ENCODE measurements at regions of chr1 and their contacts with region 1.

Region 1: DNA sequence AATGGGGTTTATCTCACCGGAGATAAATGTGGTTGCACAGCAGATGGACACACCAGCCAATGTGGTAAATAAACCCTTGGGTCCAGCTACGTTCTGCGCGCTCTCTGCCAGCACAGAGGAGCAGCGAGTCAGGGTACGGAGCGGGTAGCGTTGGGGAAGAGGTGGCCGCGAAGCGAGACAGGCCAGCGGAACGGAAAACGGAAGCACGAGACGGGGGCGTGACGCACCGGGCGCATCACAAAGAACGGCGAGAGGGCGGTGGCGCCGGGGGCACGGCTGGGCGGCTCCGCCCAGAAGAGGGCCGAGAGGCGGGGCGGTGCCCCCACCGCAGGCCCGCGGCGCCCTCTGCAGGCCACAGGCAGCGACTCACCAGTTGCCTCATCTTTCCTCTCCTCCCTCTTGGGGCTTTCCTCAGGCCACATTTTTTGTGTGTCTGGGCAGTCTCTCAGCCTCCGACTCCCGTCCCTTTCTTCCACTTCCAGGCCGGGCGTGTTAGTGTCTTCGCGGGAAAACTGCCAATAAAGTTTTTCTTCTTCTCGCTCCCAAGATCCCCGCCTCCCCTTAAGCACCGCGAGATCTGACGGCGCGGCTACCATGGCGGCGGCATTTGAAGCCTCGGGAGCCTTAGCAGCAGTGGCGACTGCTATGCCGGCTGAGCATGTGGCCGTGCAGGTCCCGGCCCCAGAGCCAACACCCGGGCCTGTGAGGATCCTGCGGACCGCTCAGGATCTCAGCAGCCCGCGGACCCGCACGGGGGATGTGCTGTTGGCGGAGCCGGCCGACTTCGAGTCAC is at the start of gene DDX20:
- DNase-seq: peak; percentile 92 to 97 (median 95)
- ATAC-seq: peak; percentile 97
- H3K4me3 ChIP-seq: peak within 1 kb of the TSS; percentile 87
- H3K4me3 Mint-ChIP-seq: peak within 1 kb of the TSS; percentile 86 to 100 (median 94)
- H3K27ac ChIP-seq: peak within 1 kb of the TSS; percentile 92
- H3K27ac Mint-ChIP-seq: peak within 1 kb of the TSS; percentile 94 to 100 (median 99)
- H3K4me1 ChIP-seq: peaks cover 4 to 18% of the 10 kb centered on the region in 2 donors
- H3K4me1 Mint-ChIP-seq: peaks cover 24 to 49% (median 39%) of the 10 kb centered on the region in 7 donors
- H3K27me3 ChIP-seq: no peaks in the 10 kb centered on the region
- H3K27me3 Mint-ChIP-seq: peaks cover 0 to 2% (median 0%) of the 10 kb centered on the region in 5 donors
- total RNA-seq, gene DDX20: 12.7 to 27.0 (median 18.7) TPM

Region 2: DNA sequence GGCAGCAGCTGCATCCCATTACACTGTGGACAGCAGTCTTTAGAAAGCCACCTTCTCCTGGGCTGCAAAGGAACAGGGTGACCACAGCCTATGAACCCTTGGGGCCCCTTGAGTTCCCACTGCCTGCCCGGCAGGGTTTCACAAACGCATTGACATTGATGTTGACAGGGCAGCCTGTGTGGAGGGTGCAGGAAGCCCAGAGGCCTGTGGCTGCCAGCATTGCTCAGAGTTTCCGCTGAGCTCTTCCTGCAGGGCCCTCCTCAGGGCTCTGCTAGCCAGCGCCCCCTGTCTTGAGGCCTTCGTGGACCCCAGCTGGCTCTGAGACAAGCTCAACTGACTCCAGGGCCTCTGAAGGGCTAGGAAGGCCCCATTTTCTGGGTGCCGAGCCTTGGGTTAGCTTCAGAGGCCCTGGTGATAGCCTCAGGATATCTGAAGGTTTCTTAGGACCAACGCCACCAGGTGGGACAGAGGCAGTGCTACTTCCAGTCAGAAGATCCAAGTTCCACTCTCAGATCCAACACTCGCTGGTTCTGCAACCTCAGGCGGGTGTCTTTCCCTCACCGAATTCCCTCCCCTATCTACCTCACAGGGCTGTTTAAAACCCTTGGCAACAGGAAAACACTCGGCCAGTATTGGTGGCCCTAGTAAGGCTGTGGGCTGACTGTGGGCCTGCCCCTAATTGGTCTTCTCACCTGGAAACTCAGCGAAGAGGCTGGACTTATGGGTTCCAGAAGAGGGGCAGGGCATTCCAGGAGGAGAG is 1964.6 kb before region 1 on chr1:
- CTCF ChIA-PET with region 1: no interaction called
- POLR2A ChIA-PET with region 1: no interaction called
- intact Hi-C with region 1: no loop called
- DNase-seq: peak; percentile 47 to 78 (median 67)
- ATAC-seq: peak; percentile 93
- H3K4me3 ChIP-seq: peak overlapping the region; percentile 1
- H3K4me3 Mint-ChIP-seq: peak overlapping the region in 8 of 10 donors; percentile 26 to 62 (median 40)
- H3K27ac ChIP-seq: peak overlapping the region; percentile 44
- H3K27ac Mint-ChIP-seq: peak overlapping the region in 8 of 9 donors; percentile 49 to 94 (median 84)
- H3K4me1 ChIP-seq: peaks cover 51 to 52% of the 10 kb centered on the region in 2 donors
- H3K4me1 Mint-ChIP-seq: peaks cover 38 to 88% (median 71%) of the 10 kb centered on the region in 7 donors
- H3K27me3 ChIP-seq: no peaks in the 10 kb centered on the region
- H3K27me3 Mint-ChIP-seq: no peaks in the 10 kb centered on the region

Region 3: GRCh38 chr1:111203681-111204200 is 551.8 kb before region 1 on chr1:
- CTCF ChIA-PET with region 1: no interaction called
- POLR2A ChIA-PET with region 1: no interaction called
- intact Hi-C with region 1: loop called in 1 of 2 experiments (anchors 5 kb)
- DNase-seq: peak; percentile 51 to 86 (median 82)
- ATAC-seq: peak; percentile 71
- H3K4me3 ChIP-seq: peak overlapping the region; percentile 84
- H3K4me3 Mint-ChIP-seq: peak overlapping the region; percentile 90 to 100 (median 99)
- H3K27ac ChIP-seq: peak overlapping the region; percentile 90
- H3K27ac Mint-ChIP-seq: peak overlapping the region; percentile 80 to 99 (median 96)
- H3K4me1 ChIP-seq: peaks cover 30 to 32% of the 10 kb centered on the region in 2 donors
- H3K4me1 Mint-ChIP-seq: peaks cover 32 to 76% (median 61%) of the 10 kb centered on the region in 7 donors
- H3K27me3 ChIP-seq: no peaks in the 10 kb centered on the region
- H3K27me3 Mint-ChIP-seq: no peaks in the 10 kb centered on the region

Region 4: DNA sequence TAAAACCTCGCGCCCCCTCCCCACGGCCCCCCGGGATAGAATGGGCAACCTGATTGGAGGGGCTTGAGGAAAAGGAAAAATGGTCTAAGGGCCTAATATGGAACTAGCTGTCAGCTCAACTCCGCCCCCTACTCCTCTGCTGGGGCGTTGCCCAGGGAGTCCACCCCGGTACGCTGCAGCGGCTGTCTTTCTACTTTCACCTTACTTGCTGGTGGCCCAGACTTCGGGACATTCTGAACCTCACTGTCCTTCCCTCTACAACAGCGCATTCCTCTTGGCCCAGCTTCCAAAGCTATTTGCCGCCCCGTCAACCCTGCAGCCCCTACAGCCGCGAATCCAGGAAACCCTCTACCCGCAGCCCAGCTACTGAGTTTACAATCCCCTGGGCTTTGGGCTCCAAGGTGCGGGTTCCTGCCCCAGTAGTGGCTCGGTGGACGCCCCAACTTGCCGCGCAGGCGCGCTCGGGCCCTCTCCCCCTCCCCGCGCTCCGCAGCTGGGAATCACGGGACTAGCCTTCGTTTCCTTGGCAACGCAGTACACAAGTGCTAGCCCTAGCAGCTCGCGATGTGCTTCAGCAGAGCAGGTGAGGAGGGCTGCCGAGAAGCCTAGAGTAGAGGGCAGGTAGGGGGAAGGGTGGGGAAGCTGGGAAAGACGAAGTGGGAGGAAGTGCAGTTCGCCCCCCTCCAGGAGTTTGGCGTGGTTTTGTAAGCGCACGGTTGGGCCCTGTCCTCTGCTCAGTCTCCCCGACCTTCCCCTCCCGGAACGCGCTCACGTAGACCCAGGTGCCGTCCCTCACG is 409.2 kb before region 1 on chr1:
- CTCF ChIA-PET with region 1: no interaction called
- POLR2A ChIA-PET with region 1: no interaction called
- intact Hi-C with region 1: loop called in 1 of 2 experiments (anchors 5 kb)
- DNase-seq: peak; percentile 74 to 94 (median 92)
- ATAC-seq: peak; percentile 94
- H3K4me3 ChIP-seq: peak overlapping the region; percentile 90
- H3K4me3 Mint-ChIP-seq: peak overlapping the region; percentile 85 to 97 (median 92)
- H3K27ac ChIP-seq: peak overlapping the region; percentile 61
- H3K27ac Mint-ChIP-seq: peak overlapping the region; percentile 38 to 97 (median 90)
- H3K4me1 ChIP-seq: peaks cover 5 to 9% of the 10 kb centered on the region in 2 donors
- H3K4me1 Mint-ChIP-seq: peaks cover 13 to 26% (median 19%) of the 10 kb centered on the region in 7 donors
- H3K27me3 ChIP-seq: no peaks in the 10 kb centered on the region
- H3K27me3 Mint-ChIP-seq: peaks cover 0 to 19% (median 0%) of the 10 kb centered on the region in 5 donors

Region 5: GRCh38 chr1:111481387-111482221 is 273.9 kb before region 1 on chr1:
- CTCF ChIA-PET with region 1: interaction called, 5 read pairs
- POLR2A ChIA-PET with region 1: interaction called, 4 read pairs
- intact Hi-C with region 1: loop called (anchors 1 kb)
- DNase-seq: peak; percentile 23 to 65 (median 54)
- ATAC-seq: peak; percentile 80
- H3K4me3 ChIP-seq: no peak overlapping the region
- H3K4me3 Mint-ChIP-seq: peak overlapping the region in 1 of 10 donors; percentile 20
- H3K27ac ChIP-seq: no peak overlapping the region
- H3K27ac Mint-ChIP-seq: peak overlapping the region in 4 of 9 donors; percentile 22 to 86 (median 56)
- H3K4me1 ChIP-seq: peaks cover 22 to 25% of the 10 kb centered on the region in 2 donors
- H3K4me1 Mint-ChIP-seq: peaks cover 32 to 68% (median 53%) of the 10 kb centered on the region in 7 donors
- H3K27me3 ChIP-seq: no peaks in the 10 kb centered on the region
- H3K27me3 Mint-ChIP-seq: peaks cover 0 to 25% (median 0%) of the 10 kb centered on the region in 5 donors

Region 6: GRCh38 chr1:111639602-111640198 is 115.8 kb before region 1 on chr1:
- CTCF ChIA-PET with region 1: no interaction called
- POLR2A ChIA-PET with region 1: no interaction called
- intact Hi-C with region 1: no loop called
- DNase-seq: no peak
- ATAC-seq: no peak
- H3K4me3 ChIP-seq: no peak overlapping the region
- H3K4me3 Mint-ChIP-seq: peak overlapping the region in 1 of 10 donors; percentile 21
- H3K27ac ChIP-seq: no peak overlapping the region
- H3K27ac Mint-ChIP-seq: peak overlapping the region in 5 of 9 donors; percentile 28 to 59 (median 44)
- H3K4me1 ChIP-seq: peaks cover 37 to 41% of the 10 kb centered on the region in 2 donors
- H3K4me1 Mint-ChIP-seq: peaks cover 43 to 85% (median 75%) of the 10 kb centered on the region in 7 donors
- H3K27me3 ChIP-seq: no peaks in the 10 kb centered on the region
- H3K27me3 Mint-ChIP-seq: no peaks in the 10 kb centered on the region

Region 7: GRCh38 chr1:111656086-111657017 is 99.2 kb before region 1 on chr1:
- CTCF ChIA-PET with region 1: no interaction called
- POLR2A ChIA-PET with region 1: interaction called, 3 read pairs
- intact Hi-C with region 1: loop called in 1 of 2 experiments (anchors 5 kb)
- DNase-seq: peak in 4 of 9 donors; percentile 15 to 36 (median 20)
- ATAC-seq: no peak
- H3K4me3 ChIP-seq: no peak overlapping the region
- H3K4me3 Mint-ChIP-seq: peak overlapping the region in 6 of 10 donors; percentile 2 to 52 (median 38)
- H3K27ac ChIP-seq: no peak overlapping the region
- H3K27ac Mint-ChIP-seq: peak overlapping the region in 8 of 9 donors; percentile 9 to 84 (median 37)
- H3K4me1 ChIP-seq: peaks cover 38 to 54% of the 10 kb centered on the region in 2 donors
- H3K4me1 Mint-ChIP-seq: peaks cover 34 to 56% (median 45%) of the 10 kb centered on the region in 7 donors
- H3K27me3 ChIP-seq: no peaks in the 10 kb centered on the region
- H3K27me3 Mint-ChIP-seq: no peaks in the 10 kb centered on the region

Region 8: GRCh38 chr1:111769517-111770146 is 14.1 kb after region 1 on chr1:
- CTCF ChIA-PET with region 1: interaction called, 8 read pairs
- POLR2A ChIA-PET with region 1: interaction called, 6 read pairs
- intact Hi-C with region 1: loop called in 1 of 2 experiments (anchors 1 kb)
- DNase-seq: peak in 7 of 9 donors; percentile 26 to 68 (median 55)
- ATAC-seq: peak; percentile 82
- H3K4me3 ChIP-seq: no peak overlapping the region
- H3K4me3 Mint-ChIP-seq: no peak overlapping the region
- H3K27ac ChIP-seq: no peak overlapping the region
- H3K27ac Mint-ChIP-seq: peak overlapping the region in 4 of 9 donors; percentile 5 to 56 (median 40)
- H3K4me1 ChIP-seq: no peaks in the 10 kb centered on the region
- H3K4me1 Mint-ChIP-seq: peaks cover 0 to 10% (median 5%) of the 10 kb centered on the region in 7 donors
- H3K27me3 ChIP-seq: no peaks in the 10 kb centered on the region
- H3K27me3 Mint-ChIP-seq: no peaks in the 10 kb centered on the region